ENCODE measurements at regions of chr1 and their contacts with region 1.

Region 1: DNA sequence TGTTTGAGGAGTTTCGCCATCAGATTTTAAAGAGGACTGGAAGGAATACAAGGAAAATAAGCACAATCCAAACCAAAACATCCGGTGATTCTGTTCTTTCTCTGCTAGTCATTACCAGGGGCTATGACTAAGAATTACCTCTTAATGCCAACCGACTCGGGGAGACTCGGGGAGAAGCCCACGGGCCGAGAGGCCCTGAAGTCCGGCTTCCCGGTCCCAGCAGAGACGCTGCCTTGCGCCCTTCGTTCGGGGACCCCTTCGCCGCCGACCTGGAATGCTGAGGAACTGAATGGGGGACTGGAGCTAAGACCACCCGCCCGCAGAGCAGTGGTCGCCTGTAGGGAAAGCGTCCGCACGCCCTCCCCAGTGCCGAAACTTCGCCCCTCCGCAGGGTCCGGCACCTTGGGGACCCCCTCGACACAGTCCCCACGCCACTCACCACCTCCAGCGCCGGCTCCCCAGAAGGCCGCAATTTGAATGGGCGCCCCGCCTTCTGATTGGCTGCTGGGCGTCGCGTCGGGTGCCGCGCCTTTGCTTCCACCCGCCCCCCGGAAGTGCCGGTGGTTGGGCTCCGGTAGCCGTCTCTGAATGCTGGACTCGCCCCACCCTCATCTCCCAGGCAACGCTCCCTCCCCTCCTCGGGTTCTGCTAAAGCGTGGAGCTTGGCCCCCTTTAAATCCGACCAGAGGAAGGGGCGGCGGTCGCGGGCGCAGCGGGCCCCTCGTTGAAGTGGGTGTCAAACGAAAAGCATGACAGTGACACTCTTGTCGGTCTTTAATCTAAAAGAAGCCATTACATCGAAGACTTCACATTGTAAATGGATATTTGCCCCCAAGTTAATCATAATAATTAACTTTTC is at the start of gene KIF14:
- DNase-seq: peak; percentile 89
- H3K4me3 ChIP-seq: peak within 1 kb of the TSS; percentile 58 to 94 (median 81)
- H3K27ac ChIP-seq: peak within 1 kb of the TSS; percentile 95
- H3K4me1 ChIP-seq: peaks cover 16% of the 10 kb centered on the region
- H3K27me3 ChIP-seq: no peaks in the 10 kb centered on the region
- CTCF ChIP-seq: no peak
- POLR2A ChIP-seq: peak; percentile 51
- total RNA-seq, gene KIF14: 12.6 and 13.8 TPM in 2 replicates

Region 2: GRCh38 chr1:200473698-200474371 is 146.7 kb before region 1 on chr1:
- CTCF ChIA-PET with region 1: no interaction called
- POLR2A ChIA-PET with region 1: no interaction called
- dilution Hi-C with region 1: no loop called
- intact Hi-C with region 1: no loop called
- DNase-seq: no peak
- H3K4me3 ChIP-seq: no peak overlapping the region
- H3K27ac ChIP-seq: no peak overlapping the region
- H3K4me1 ChIP-seq: no peaks in the 10 kb centered on the region
- H3K27me3 ChIP-seq: peaks cover 0 to 5% of the 10 kb centered on the region in 2 experiments
- CTCF ChIP-seq: no peak
- POLR2A ChIP-seq: no peak

Region 3: GRCh38 chr1:200639790-200640669 is 19.5 kb after region 1 on chr1:
- CTCF ChIA-PET with region 1: interaction called, 33 read pairs
- POLR2A ChIA-PET with region 1: interaction called, 4 read pairs
- dilution Hi-C with region 1: no loop called
- intact Hi-C with region 1: no loop called
- DNase-seq: peak; percentile 81
- H3K4me3 ChIP-seq: no peak overlapping the region
- H3K27ac ChIP-seq: peak overlapping the region; percentile 77
- H3K4me1 ChIP-seq: peaks cover 14% of the 10 kb centered on the region
- H3K27me3 ChIP-seq: no peaks in the 10 kb centered on the region
- CTCF ChIP-seq: no peak
- POLR2A ChIP-seq: no peak

Region 4: DNA sequence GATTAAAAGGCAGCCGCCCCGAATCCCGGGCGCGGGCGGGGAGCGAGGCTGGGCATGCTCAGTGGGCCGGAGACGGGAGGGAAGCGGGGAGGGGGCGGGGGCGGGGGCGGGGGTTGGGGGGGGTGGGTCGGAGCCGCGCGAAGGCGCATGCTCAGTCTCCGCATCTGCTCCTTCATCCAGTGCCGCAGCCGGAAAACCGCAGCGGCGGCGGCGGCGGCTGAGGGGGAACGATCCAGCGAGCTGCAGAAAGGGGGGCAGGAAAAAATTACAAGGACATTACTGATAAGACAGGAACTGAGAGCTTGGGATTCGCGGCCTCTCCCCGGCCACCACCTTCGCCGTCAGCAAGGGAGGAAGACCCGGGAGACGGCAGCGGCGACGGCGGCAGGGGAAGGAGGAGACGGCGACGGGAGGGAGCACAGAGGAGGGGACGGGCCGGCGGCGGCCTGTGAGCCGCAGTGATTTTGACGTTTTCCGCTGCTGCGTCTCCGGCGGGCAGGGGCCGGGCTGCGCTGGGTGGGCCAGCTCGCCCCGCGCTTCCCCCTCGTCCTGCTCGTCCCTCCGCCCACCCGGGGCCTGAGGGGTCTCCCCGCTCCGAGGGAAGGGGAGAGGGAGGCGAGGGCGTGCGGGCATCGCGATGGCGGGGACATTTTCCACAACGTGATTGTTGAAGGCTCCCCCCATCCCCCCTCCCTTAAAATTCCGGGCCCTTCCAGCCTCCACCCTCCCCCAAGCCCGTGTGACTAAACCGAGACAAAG is 118.4 kb after region 1 on chr1 and contains the start of gene CAMSAP2:
- CTCF ChIA-PET with region 1: interaction called, 39 read pairs
- POLR2A ChIA-PET with region 1: interaction called, 3 read pairs
- dilution Hi-C with region 1: no loop called
- intact Hi-C with region 1: loop called (anchors 1 kb)
- DNase-seq: peak; percentile 90
- H3K4me3 ChIP-seq: peak within 1 kb of the TSS; percentile 70 to 95 (median 88)
- H3K27ac ChIP-seq: peak within 1 kb of the TSS; percentile 92
- H3K4me1 ChIP-seq: peaks cover 29% of the 10 kb centered on the region
- H3K27me3 ChIP-seq: no peaks in the 10 kb centered on the region
- CTCF ChIP-seq: no peak
- POLR2A ChIP-seq: peak; percentile 81
- total RNA-seq, gene CAMSAP2: 43.9 and 45.5 TPM in 2 replicates

Region 5: DNA sequence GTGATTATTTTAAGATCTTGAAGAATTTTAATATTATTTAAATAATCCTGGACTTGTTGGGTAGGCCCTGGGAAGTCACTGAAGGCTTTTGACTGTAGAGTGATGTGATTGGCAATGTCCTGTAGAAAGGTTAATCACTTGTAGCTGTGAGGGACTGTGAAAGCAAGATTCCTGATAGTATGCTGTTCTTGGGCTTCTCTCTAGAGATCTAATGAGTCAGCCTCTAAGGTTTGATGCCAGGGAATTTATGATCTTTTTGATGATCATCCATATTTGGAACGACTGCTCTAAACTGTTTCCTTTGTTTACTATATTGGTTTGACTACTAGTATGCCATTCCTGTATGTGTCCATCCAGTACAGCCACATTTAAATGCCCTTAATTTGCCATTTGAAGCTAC is 174.7 kb after region 1 on chr1:
- CTCF ChIA-PET with region 1: interaction called, 177 read pairs
- POLR2A ChIA-PET with region 1: no interaction called
- dilution Hi-C with region 1: loop called (anchors 25 kb)
- intact Hi-C with region 1: no loop called
- DNase-seq: peak; percentile 52
- H3K4me3 ChIP-seq: no peak overlapping the region
- H3K27ac ChIP-seq: no peak overlapping the region
- H3K4me1 ChIP-seq: peaks cover 6% of the 10 kb centered on the region
- H3K27me3 ChIP-seq: no peaks in the 10 kb centered on the region
- CTCF ChIP-seq: no peak
- POLR2A ChIP-seq: no peak

Region 6: DNA sequence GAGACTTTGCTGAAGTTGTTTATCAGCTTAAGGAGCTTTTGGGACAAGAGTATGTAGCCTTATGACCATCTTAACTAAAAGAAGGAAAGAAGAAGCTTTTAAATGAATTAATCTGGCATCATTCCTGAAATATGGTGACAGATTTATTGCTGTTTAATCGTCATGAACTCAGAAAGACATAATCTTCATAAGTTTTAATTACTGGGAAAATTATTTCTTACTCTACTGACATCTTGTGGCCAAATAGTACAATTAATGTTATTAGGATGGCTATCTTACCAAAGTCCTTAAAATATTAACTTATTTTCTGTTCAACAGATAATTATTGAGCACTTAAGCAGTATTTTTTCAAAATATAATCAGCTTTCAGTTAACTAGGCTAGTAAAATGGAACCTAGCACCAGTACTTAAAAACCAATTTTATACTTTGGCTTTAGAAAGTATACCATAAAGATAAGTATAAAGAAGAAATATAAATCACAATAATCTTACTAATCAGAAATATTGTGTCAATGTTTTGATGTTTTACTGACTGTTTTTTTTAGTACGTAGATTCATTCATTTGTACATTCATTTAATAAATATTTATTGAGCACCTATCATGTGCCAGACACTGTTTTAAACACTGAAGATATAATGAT is 217.5 kb after region 1 on chr1:
- CTCF ChIA-PET with region 1: interaction called, 65 read pairs
- POLR2A ChIA-PET with region 1: interaction called, 3 read pairs
- dilution Hi-C with region 1: no loop called
- intact Hi-C with region 1: loop called (anchors 1 kb)
- DNase-seq: peak; percentile 60
- H3K4me3 ChIP-seq: no peak overlapping the region
- H3K27ac ChIP-seq: no peak overlapping the region
- H3K4me1 ChIP-seq: no peaks in the 10 kb centered on the region
- H3K27me3 ChIP-seq: no peaks in the 10 kb centered on the region
- CTCF ChIP-seq: peak; percentile 11 to 16
- POLR2A ChIP-seq: no peak

Region 7: GRCh38 chr1:201114236-201115131 is 494.0 kb after region 1 on chr1:
- CTCF ChIA-PET with region 1: interaction called, 6 read pairs
- POLR2A ChIA-PET with region 1: no interaction called
- dilution Hi-C with region 1: no loop called
- intact Hi-C with region 1: loop called (anchors 5 kb)
- DNase-seq: peak; percentile 93
- H3K4me3 ChIP-seq: peak overlapping the region in 2 of 3 experiments; percentile 9 to 35
- H3K27ac ChIP-seq: no peak overlapping the region
- H3K4me1 ChIP-seq: no peaks in the 10 kb centered on the region
- H3K27me3 ChIP-seq: peaks cover 26 to 45% of the 10 kb centered on the region in 2 experiments
- CTCF ChIP-seq: peak; percentile 73 to 89
- POLR2A ChIP-seq: no peak